ENCODE measurements at regions of chr1 and their contacts with region 1.

Region 1: DNA sequence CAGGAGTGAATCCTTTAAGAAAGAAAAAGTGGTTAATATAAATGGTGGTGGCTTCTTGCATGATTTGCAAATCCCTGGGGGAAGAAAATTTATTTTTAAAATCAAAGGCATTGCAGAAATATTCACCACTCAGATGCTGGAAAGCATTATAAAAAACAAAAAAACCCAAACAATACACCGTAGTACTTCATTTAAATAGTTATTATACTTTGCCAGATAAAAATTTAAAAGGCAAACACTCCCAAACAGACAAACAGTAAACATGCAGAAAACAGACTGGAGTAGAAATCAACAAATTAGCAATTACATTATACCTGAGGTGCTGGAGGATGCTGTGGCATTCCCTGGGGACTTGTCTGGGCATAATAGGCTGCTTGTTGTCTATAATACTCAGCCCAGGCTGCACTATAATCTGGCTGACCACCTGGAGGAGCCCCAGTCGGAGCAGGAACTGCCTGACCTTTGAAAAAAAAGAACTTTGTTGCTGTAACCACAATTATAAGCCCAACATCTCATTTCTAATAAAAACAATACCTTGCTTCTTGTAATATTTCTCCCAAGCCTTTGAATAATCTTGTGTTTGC is 29.9 kb downstream of the FUBP1 start:
- DNase-seq: peak in 3 of 5 donors; percentile 24 to 33 (median 29)
- ATAC-seq: peak; percentile 38 to 78 (median 50)
- H3K4me3 ChIP-seq: no peak overlapping the region
- H3K27ac ChIP-seq: no peak overlapping the region
- H3K4me1 ChIP-seq: peaks cover 0 to 20% (median 11%) of the 10 kb centered on the region in 12 donors
- H3K27me3 ChIP-seq: no peaks in the 10 kb centered on the region
- CTCF ChIP-seq: peak in 8 of 12 donors; percentile 5 to 43 (median 26)
- POLR2A ChIP-seq: no peak

Region 2: GRCh38 chr1:77718181-77718580 is 230.8 kb before region 1 on chr1:
- intact Hi-C with region 1: loop called in 1 of 10 experiments (anchors 10 kb)
- DNase-seq: no peak
- ATAC-seq: no peak
- H3K4me3 ChIP-seq: no peak overlapping the region
- H3K27ac ChIP-seq: no peak overlapping the region
- H3K4me1 ChIP-seq: no peaks in the 10 kb centered on the region
- H3K27me3 ChIP-seq: no peaks in the 10 kb centered on the region
- CTCF ChIP-seq: no peak
- POLR2A ChIP-seq: no peak

Region 3: DNA sequence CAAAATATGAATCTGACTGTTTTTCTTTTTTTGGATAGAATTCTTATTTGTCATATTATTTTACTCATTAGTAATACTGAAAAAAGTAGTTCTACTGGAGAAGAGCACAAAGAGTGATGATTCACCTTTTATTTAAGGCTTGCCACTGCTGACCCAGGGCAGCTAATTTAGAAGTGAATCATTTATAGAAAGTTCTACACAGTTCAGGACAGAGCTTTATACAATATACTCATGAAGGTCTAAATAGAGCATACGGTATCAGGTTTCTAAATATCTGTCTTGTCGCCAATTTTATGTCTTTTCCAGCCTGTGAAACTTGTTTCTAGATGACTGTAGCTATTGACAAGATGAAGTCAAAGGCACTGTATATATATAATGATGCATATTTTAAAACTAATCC is 121.8 kb after region 1 on chr1:
- intact Hi-C with region 1: no loop called
- DNase-seq: no peak
- ATAC-seq: peak; percentile 72 to 83 (median 78)
- H3K4me3 ChIP-seq: no peak overlapping the region
- H3K27ac ChIP-seq: peak overlapping the region in 10 of 12 donors; percentile 28 to 90 (median 68)
- H3K4me1 ChIP-seq: peaks cover 0 to 52% (median 15%) of the 10 kb centered on the region in 12 donors
- H3K27me3 ChIP-seq: no peaks in the 10 kb centered on the region
- CTCF ChIP-seq: no peak
- POLR2A ChIP-seq: no peak